Mammary epithelial cell (primary cell): ENCODE measurements at regions of chr12 and their contacts with region 1.

Region 1: GRCh38 chr12:122021822-122022526 is at the start of gene BCL7A:
- DNase-seq: peak; percentile 81
- H3K4me3 ChIP-seq: peak within 1 kb of the TSS; percentile 66 to 80 (median 72)
- H3K27ac ChIP-seq: peak within 1 kb of the TSS; percentile 77
- H3K4me1 ChIP-seq: peaks cover 30% of the 10 kb centered on the region
- H3K27me3 ChIP-seq: no peaks in the 10 kb centered on the region
- CTCF ChIP-seq: no peak
- total RNA-seq, gene BCL7A: 15.8 to 27.7 TPM

Region 2: GRCh38 chr12:121955258-121956235 is 66.4 kb before region 1 on chr12:
- CTCF ChIA-PET with region 1: no interaction called
- dilution Hi-C with region 1: no loop called
- in situ Hi-C with region 1: no loop called
- intact Hi-C with region 1: loop called (anchors 1 kb)
- DNase-seq: peak; percentile 10
- H3K4me3 ChIP-seq: no peak overlapping the region
- H3K27ac ChIP-seq: no peak overlapping the region
- H3K4me1 ChIP-seq: no peaks in the 10 kb centered on the region
- H3K27me3 ChIP-seq: no peaks in the 10 kb centered on the region
- CTCF ChIP-seq: peak; percentile 61 to 72

Region 3: GRCh38 chr12:121992059-121992879 is 29.7 kb before region 1 on chr12:
- CTCF ChIA-PET with region 1: no interaction called
- dilution Hi-C with region 1: no loop called
- in situ Hi-C with region 1: no loop called
- intact Hi-C with region 1: loop called (anchors 2 kb)
- DNase-seq: peak; percentile 100
- H3K4me3 ChIP-seq: no peak overlapping the region
- H3K27ac ChIP-seq: peak overlapping the region; percentile 74
- H3K4me1 ChIP-seq: peaks cover 26% of the 10 kb centered on the region
- H3K27me3 ChIP-seq: no peaks in the 10 kb centered on the region
- CTCF ChIP-seq: no peak

Region 4: GRCh38 chr12:122003651-122004611 is 18.0 kb before region 1 on chr12:
- CTCF ChIA-PET with region 1: no interaction called
- dilution Hi-C with region 1: no loop called
- in situ Hi-C with region 1: no loop called
- intact Hi-C with region 1: loop called (anchors 1 kb)
- DNase-seq: no peak
- H3K4me3 ChIP-seq: no peak overlapping the region
- H3K27ac ChIP-seq: no peak overlapping the region
- H3K4me1 ChIP-seq: peaks cover 4% of the 10 kb centered on the region
- H3K27me3 ChIP-seq: no peaks in the 10 kb centered on the region
- CTCF ChIP-seq: no peak